GM12878 (cell line): ENCODE measurements at regions of chrX and their contacts with region 1.

Region 1: DNA sequence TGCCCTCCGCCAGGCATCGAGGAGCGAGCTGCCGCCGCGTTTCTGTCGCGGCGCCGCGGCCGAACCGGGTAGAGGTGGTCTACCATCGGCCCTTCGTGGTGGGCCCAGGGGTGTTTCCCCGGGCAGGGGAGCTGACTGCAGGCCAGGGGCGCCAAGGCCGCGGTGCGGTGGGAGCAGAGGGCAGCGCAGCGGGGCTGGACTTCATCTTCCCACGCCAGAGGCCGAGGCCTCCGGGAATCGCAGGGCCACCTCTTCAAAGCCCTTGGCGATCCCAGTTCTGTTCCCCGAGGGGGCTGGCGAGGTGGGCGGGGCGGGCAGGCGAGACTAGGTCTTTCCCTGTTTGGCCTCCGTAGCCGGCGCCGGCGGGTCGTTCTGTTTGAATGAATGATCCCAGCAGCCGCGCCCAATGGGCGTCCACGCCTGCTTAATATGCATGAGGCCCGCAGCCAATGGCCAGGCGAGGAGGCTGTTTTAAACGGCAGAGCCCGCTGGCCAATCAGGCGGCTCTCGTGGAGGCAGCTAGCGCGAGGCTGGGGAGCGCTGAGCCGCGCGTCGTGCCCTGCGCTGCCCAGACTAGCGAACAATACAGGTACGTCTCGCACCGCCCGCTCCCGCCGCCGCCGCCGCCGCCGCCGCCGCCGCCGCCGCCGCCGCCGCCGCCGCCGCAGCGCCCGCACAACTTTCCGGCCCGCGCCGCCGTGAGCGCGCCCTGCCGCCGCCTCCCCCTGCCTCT is at the start of gene HMGB3:
- DNase-seq: peak; percentile 53
- ATAC-seq: peak; percentile 100
- H3K4me3 ChIP-seq: peak within 1 kb of the TSS; percentile 69
- H3K27ac ChIP-seq: peak within 1 kb of the TSS; percentile 48; the same call in 1 of the 2 replicates
- H3K4me1 ChIP-seq: no peaks in the 10 kb centered on the region
- H3K27me3 ChIP-seq: no peaks in the 10 kb centered on the region
- CTCF ChIP-seq: no peak
- EP300 ChIP-seq: no peak
- POLR2A ChIP-seq: peak; percentile 76
- RAD21 ChIP-seq: no peak
- polyA plus RNA-seq, gene HMGB3: 158 to 167 TPM

Region 2: DNA sequence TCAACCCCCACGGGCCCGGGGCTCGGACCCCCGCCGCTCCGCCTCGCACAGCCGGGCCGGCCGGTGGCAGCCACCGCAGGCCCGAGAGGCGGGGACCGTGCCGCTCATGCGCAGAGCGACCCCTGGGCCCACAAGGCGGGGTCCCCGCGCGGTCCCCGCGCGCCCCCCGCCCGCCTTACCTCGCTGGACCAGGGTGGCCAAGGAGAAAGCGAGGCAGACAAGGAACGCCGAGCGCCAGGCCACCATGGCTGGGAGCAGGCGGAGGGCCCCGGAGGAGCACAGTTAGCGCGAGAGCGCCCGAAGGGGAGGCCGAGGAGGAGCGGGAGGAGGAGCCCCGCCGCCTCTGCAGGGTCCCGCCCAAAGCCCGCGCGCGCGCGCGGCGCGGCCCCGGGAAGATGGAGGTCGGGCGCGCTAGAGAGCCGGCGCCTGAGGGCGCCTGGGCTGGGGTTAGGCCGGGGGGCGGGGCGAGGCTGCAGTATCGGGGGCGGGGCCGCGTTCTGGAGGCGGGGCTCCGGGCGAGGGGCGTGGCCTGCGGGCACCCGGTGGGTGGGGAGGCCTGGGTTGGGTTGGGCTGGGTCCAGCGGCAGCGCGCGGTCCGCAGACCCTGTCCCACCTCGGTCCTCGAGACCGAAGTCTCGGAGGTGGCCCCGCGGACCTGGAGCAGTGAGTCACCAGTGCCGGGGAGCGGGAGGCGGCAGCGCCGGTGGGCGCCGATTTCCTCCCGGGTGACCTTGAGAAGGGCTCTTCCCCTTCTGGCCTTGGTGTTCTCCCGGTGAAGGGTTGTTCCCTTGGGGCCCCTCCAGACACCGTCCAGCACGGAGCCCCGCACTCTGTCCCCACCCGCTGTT is 84.4 kb before region 1 on chrX and contains the start of gene CD99L2:
- CTCF ChIA-PET with region 1: no interaction called
- POLR2A ChIA-PET with region 1: interaction called, 4 read pairs
- RAD21 ChIA-PET with region 1: no interaction called
- SMC1A ChIA-PET with region 1: interaction called, 3 read pairs
- in situ Hi-C with region 1: no loop called
- intact Hi-C with region 1: loop called (anchors 2 kb)
- DNase-seq: no peak
- ATAC-seq: peak; percentile 96
- H3K4me3 ChIP-seq: peak within 1 kb of the TSS; percentile 71
- H3K27ac ChIP-seq: peak within 1 kb of the TSS; percentile 69
- H3K4me1 ChIP-seq: no peaks in the 10 kb centered on the region; the same call in 1 of the 2 replicates
- H3K27me3 ChIP-seq: no peaks in the 10 kb centered on the region
- CTCF ChIP-seq: no peak
- EP300 ChIP-seq: no peak
- POLR2A ChIP-seq: peak; percentile 84
- RAD21 ChIP-seq: no peak
- polyA plus RNA-seq, gene CD99L2: 1.1 to 2.3 TPM

Region 3: DNA sequence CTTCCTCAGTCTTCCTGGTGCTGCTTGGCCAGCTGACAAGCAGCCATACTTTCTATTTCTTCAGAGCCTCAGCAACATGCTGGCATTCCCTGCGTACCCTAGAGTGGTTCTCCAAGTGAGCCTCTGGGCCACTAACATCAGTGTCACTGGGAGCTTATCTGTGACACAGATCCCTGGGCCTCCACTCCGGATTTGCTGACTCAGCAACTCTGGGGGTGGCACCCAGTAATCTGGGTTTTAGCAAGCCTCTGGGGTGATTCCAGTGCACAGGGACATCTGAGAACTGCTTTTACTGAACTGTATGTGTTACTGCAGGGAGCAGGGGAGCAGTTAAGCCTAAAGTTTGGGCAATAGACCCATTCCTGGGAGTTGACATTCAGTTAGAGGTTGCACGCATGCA is 28.0 kb before region 1 on chrX:
- CTCF ChIA-PET with region 1: no interaction called
- POLR2A ChIA-PET with region 1: no interaction called
- RAD21 ChIA-PET with region 1: no interaction called
- SMC1A ChIA-PET with region 1: no interaction called
- in situ Hi-C with region 1: no loop called
- intact Hi-C with region 1: no loop called
- DNase-seq: no peak
- ATAC-seq: no peak
- H3K4me3 ChIP-seq: no peak overlapping the region
- H3K27ac ChIP-seq: no peak overlapping the region
- H3K4me1 ChIP-seq: no peaks in the 10 kb centered on the region
- H3K27me3 ChIP-seq: no peaks in the 10 kb centered on the region
- CTCF ChIP-seq: no peak
- EP300 ChIP-seq: no peak
- POLR2A ChIP-seq: no peak
- RAD21 ChIP-seq: no peak

Region 4: DNA sequence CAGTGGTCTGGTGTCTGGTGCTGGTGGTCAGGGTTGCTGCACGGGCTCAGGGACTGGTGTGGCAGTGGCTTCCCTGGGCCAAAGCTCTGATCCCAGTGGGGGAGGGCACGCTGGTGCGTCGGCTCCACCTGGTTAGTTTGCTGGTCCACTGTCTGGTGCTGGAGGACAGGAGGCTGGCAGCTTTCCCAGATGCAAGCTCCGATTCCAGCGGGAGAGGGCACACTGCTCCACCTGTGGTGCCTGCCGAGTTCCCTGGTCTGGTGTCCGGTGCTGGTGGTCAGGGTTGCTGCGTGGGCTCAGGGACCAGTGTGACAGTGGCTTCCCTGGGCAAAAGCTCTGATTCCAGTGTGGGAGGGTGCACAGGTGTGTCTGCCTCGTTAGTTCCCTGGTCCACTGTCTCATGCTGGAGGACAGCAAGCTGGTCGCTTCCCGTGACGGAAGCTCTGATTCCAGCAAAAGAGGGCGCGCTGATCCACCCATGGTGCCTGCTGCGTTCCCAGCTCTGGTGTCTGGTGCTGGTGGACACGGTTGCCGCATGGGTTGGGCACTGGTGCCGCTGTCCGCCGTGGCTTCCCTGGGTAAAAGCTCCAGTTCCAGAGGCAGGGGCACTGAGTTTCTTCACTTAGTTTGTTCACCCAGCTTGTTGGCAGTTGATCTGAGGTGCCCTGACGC is 419.9 kb after region 1 on chrX:
- CTCF ChIA-PET with region 1: no interaction called
- POLR2A ChIA-PET with region 1: no interaction called
- RAD21 ChIA-PET with region 1: no interaction called
- SMC1A ChIA-PET with region 1: no interaction called
- in situ Hi-C with region 1: no loop called
- intact Hi-C with region 1: loop called (anchors 10 kb)
- DNase-seq: no peak
- ATAC-seq: no peak
- H3K4me3 ChIP-seq: no peak overlapping the region
- H3K27ac ChIP-seq: no peak overlapping the region
- H3K4me1 ChIP-seq: no peaks in the 10 kb centered on the region
- H3K27me3 ChIP-seq: no peaks in the 10 kb centered on the region
- CTCF ChIP-seq: no peak
- EP300 ChIP-seq: no peak
- POLR2A ChIP-seq: no peak
- RAD21 ChIP-seq: no peak